ENCODE measurements at regions of chr1 and their contacts with region 1.

Region 1: GRCh38 chr1:163174524-163175437 is 27.9 kb downstream of the RGS5 start:
- DNase-seq: peak; percentile 20
- ATAC-seq: peak; percentile 78
- H3K4me3 ChIP-seq: no peak overlapping the region
- H3K27ac ChIP-seq: no peak overlapping the region
- H3K4me1 ChIP-seq: no peaks in the 10 kb centered on the region
- H3K27me3 ChIP-seq: no peaks in the 10 kb centered on the region
- CTCF ChIP-seq: peak; percentile 79
- EP300 ChIP-seq: no peak
- POLR2A ChIP-seq: no peak
- RAD21 ChIP-seq: no peak

Region 2: GRCh38 chr1:162847839-162848453 is 326.8 kb before region 1 on chr1:
- CTCF ChIA-PET with region 1: interaction called, 11 read pairs
- POLR2A ChIA-PET with region 1: no interaction called
- in situ Hi-C with region 1: no loop called
- intact Hi-C with region 1: loop called (anchors 1 kb)
- DNase-seq: peak; percentile 62
- ATAC-seq: peak; percentile 54; the same call in 2 of the 3 replicates
- H3K4me3 ChIP-seq: no peak overlapping the region
- H3K27ac ChIP-seq: no peak overlapping the region
- H3K4me1 ChIP-seq: no peaks in the 10 kb centered on the region
- H3K27me3 ChIP-seq: peaks cover 1 to 6% of the 10 kb centered on the region in 2 experiments; a peak in 1 of 5 replicates
- CTCF ChIP-seq: peak; percentile 78
- EP300 ChIP-seq: no peak
- POLR2A ChIP-seq: no peak
- RAD21 ChIP-seq: no peak

Region 3: GRCh38 chr1:162854245-162854882 is 320.4 kb before region 1 on chr1:
- CTCF ChIA-PET with region 1: interaction called, 16 read pairs
- POLR2A ChIA-PET with region 1: no interaction called
- in situ Hi-C with region 1: no loop called
- intact Hi-C with region 1: loop called (anchors 2 kb)
- DNase-seq: peak; percentile 59
- ATAC-seq: peak; percentile 92
- H3K4me3 ChIP-seq: no peak overlapping the region
- H3K27ac ChIP-seq: no peak overlapping the region
- H3K4me1 ChIP-seq: no peaks in the 10 kb centered on the region
- H3K27me3 ChIP-seq: peaks cover 0 to 8% of the 10 kb centered on the region in 2 experiments; a peak in 2 of 5 replicates
- CTCF ChIP-seq: peak; percentile 71
- EP300 ChIP-seq: no peak
- POLR2A ChIP-seq: no peak
- RAD21 ChIP-seq: peak; percentile 37; the same call in 1 of the 2 replicates

Region 4: DNA sequence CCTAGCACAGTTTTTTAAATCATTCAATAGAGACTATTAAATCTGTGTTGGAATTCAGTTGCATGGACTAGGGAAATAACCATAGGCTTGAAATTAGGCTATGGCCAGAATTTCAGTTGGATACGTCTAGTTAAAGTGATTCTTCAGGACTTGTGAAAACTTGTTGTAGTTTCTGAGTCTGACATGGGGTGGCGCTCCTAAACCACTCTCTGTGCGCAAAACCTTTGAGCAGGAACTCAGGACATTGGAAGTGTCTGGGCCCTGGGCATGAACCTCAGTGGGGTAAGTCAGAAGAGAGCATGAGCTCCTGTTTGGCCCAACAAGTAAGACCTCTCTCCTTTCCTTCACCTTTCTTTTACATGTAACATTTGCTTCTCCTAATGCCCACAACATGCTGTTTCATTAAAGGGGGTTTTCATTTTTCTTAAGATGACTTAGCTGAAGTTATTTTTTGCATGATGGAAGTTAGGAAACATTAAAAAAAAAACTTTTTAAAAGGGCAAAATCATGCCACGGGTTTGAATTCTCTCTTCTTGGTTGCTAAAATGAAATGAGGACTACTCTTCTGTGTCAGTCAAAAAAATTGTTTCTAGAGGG is 296.7 kb before region 1 on chr1:
- CTCF ChIA-PET with region 1: interaction called, 23 read pairs
- POLR2A ChIA-PET with region 1: no interaction called
- in situ Hi-C with region 1: no loop called
- intact Hi-C with region 1: loop called (anchors 1 kb)
- DNase-seq: peak; percentile 45
- ATAC-seq: peak; percentile 55
- H3K4me3 ChIP-seq: no peak overlapping the region
- H3K27ac ChIP-seq: no peak overlapping the region
- H3K4me1 ChIP-seq: peaks cover 25% of the 10 kb centered on the region
- H3K27me3 ChIP-seq: peaks cover 0 to 19% of the 10 kb centered on the region in 2 experiments; a peak in 2 of 5 replicates
- CTCF ChIP-seq: peak; percentile 87
- EP300 ChIP-seq: no peak
- POLR2A ChIP-seq: no peak
- RAD21 ChIP-seq: peak; percentile 72

Region 5: DNA sequence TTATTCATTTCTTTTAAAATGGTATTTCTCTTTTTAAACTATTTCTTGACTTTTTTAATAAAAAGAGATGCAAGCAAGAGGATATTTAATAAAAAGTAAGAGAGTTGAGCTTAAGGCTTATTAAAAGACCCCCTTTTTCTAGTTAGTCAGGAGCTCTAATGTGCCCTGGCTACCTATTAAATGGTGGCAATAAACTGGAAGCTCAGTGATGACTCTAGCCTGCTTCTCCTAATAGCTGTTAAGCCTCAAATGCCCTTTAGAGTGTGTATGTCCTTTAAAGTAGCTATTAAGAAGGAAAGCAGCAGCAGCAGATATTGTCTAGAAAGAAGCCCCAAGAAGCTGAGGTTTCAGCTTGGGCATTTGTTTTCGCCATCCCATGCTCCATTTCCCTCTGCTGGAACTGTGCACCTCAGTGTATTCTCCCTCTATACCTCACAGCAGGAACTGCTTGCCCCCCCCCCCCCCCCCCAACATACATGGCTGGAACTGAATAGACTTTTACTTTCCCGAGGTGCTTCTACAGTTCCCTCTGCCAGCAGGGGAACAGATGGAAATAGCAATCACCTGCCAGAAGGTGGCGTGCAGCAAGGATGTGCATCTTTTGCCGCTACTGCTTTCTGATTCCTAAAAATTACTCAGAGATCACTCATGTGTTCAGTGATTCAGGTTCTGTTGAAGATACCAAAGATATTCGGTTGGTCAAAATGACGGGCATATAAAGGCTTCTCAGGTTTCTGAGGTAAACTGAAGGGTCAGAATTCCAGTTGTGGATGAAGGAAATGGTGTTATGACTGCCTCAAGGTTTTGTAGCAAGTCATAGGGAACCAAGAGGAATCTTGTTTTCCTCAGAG is 103.2 kb before region 1 on chr1:
- CTCF ChIA-PET with region 1: interaction called, 12 read pairs
- POLR2A ChIA-PET with region 1: no interaction called
- in situ Hi-C with region 1: no loop called
- intact Hi-C with region 1: loop called (anchors 2 kb)
- DNase-seq: peak; percentile 30
- ATAC-seq: peak; percentile 86
- H3K4me3 ChIP-seq: no peak overlapping the region
- H3K27ac ChIP-seq: no peak overlapping the region
- H3K4me1 ChIP-seq: no peaks in the 10 kb centered on the region
- H3K27me3 ChIP-seq: 0 out of 5 replicates have a peak, but pooled peaks cover 0 to 2% of the 10 kb centered on the region in 2 experiments
- CTCF ChIP-seq: peak; percentile 72
- EP300 ChIP-seq: no peak
- POLR2A ChIP-seq: no peak
- RAD21 ChIP-seq: no peak

Region 6: GRCh38 chr1:163315773-163316374 is 141.1 kb after region 1 on chr1:
- CTCF ChIA-PET with region 1: no interaction called
- POLR2A ChIA-PET with region 1: no interaction called
- in situ Hi-C with region 1: no loop called
- intact Hi-C with region 1: loop called (anchors 5 kb)
- DNase-seq: peak; percentile 31
- ATAC-seq: no peak
- H3K4me3 ChIP-seq: no peak overlapping the region
- H3K27ac ChIP-seq: no peak overlapping the region
- H3K4me1 ChIP-seq: peaks cover 9% of the 10 kb centered on the region
- H3K27me3 ChIP-seq: no peaks in the 10 kb centered on the region
- CTCF ChIP-seq: peak; percentile 54
- EP300 ChIP-seq: no peak
- POLR2A ChIP-seq: no peak
- RAD21 ChIP-seq: no peak

Measured in HepG2 (cell line).